Esophagus squamous epithelium (tissue), 5 donors: ENCODE measurements at regions of chr19 and their contacts with region 1.

Region 1: GRCh38 chr19:14006243-14006765 is at the start of gene RFX1:
- DNase-seq: peak; percentile 98
- H3K4me3 ChIP-seq: peak within 1 kb of the TSS; percentile 62 to 98 (median 88)
- H3K27ac ChIP-seq: peak within 1 kb of the TSS; percentile 94 to 100 (median 98)
- H3K4me1 ChIP-seq: peaks cover 23 to 66% (median 30%) of the 10 kb centered on the region in 3 donors
- H3K27me3 ChIP-seq: no peaks in the 10 kb centered on the region
- CTCF ChIP-seq: no peak
- POLR2A ChIP-seq: no peak
- total RNA-seq, gene RFX1: 1.8 to 7.5 (median 3.9) TPM

Region 2: GRCh38 chr19:13162518-13163314 is 843.6 kb before region 1 on chr19:
- intact Hi-C with region 1: loop called (anchors 10 kb)
- DNase-seq: peak; percentile 79
- H3K4me3 ChIP-seq: peak overlapping the region; percentile 23 to 60 (median 38)
- H3K27ac ChIP-seq: peak overlapping the region; percentile 92 to 97 (median 96)
- H3K4me1 ChIP-seq: peaks cover 48 to 79% (median 63%) of the 10 kb centered on the region in 3 donors
- H3K27me3 ChIP-seq: no peaks in the 10 kb centered on the region
- CTCF ChIP-seq: no peak
- POLR2A ChIP-seq: peak in 2 of 4 donors; percentile 49 to 71

Region 3: GRCh38 chr19:14091081-14091812 is 84.9 kb after region 1 on chr19:
- intact Hi-C with region 1: no loop called
- DNase-seq: no peak
- H3K4me3 ChIP-seq: peak overlapping the region; percentile 64 to 98 (median 84)
- H3K27ac ChIP-seq: peak overlapping the region; percentile 88 to 98 (median 92)
- H3K4me1 ChIP-seq: peaks cover 10 to 24% (median 11%) of the 10 kb centered on the region in 3 donors
- H3K27me3 ChIP-seq: no peaks in the 10 kb centered on the region
- CTCF ChIP-seq: peak in 1 of 6 experiments; percentile 19
- POLR2A ChIP-seq: peak in 2 of 4 donors; percentile 81 to 88